Activated T-helper 1 cell treated with anti-CD3 and anti-CD28 coated beads, Interleukin-12 subunit alpha, Interleukin-12 subunit beta, Interleukin-2, Interleukin-4 antibody, amounts not matched to agents 30 ng/mL and 10 ng/mL and 1 ng/mL, durations not matched to agents 14 hours and 24 hours and 36 hours (primary cell): ENCODE measurements at regions of chr3 and their contacts with region 1.

Region 1: DNA sequence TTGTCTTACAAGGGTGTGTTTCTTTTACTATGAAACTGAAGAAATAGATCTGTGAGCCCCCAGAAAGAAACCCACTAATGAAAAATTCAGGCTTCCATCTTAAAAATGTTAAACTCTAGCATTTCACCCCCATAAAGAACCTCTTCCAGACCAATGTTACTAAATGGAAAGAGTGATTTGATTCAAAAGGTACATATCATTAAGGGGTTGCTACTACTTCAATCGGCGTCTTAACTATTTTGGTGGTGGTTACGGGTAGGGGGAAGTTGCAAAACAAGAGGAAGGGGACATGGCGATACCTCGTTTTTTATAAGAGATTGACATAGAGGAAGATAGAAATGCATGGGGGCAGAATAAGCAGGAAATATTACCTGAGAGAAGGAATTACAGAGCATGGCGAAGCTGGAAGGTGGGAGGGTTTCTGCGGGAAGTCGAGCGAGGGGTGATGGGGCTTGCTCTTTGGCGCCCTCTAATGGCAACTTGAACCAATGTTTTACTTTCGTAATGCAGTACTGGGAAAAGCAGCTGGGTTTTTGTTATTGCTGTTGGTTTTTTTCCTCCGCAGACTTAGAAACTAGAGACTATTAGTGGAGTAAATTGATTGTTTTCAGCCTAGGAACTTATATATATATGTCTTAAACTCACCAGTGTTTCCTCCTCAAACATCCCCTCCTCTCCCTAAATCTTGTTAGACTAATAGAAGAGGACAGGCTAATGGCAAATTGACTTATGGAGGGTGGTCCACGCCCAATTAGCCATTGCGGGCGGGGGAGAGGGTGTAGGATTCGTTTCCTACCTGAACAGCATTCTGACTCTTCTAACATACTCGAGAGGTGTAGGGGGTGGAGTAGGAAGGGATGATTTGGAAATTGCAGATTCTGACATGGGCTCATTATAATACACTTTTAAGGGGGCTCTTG is 11.3 kb upstream of the SOX2 start:
- DNase-seq: peak; percentile 45
- H3K4me3 Mint-ChIP-seq: peak overlapping the region; percentile 25
- H3K27ac Mint-ChIP-seq: peak overlapping the region; percentile 9
- H3K4me1 Mint-ChIP-seq: peaks cover 21% of the 10 kb centered on the region
- H3K27me3 Mint-ChIP-seq: peaks cover 88% of the 10 kb centered on the region

Region 2: DNA sequence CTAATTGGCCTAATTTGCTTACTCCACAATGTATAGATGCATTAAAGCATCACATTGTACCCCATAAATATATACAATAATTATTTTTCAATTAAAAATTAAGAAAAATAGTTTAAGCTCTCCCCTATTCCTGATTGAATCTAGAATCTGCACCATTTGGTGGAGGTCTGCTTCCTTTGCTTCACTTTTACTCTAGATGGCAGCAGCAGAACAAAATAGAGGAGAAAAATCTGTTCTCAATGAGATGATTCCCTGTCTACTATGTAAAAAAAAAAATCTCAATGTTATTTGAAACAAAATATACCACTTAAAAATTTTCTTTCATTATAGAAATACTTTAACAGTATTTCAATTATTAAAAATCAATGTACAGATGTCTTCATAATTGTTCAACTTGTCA is 897.6 kb before region 1 on chr3:
- intact Hi-C with region 1: loop called (anchors 5 kb)
- DNase-seq: no peak
- H3K4me3 Mint-ChIP-seq: no peak overlapping the region
- H3K27ac Mint-ChIP-seq: no peak overlapping the region
- H3K4me1 Mint-ChIP-seq: no peaks in the 10 kb centered on the region
- H3K27me3 Mint-ChIP-seq: peaks cover 1% of the 10 kb centered on the region

Region 3: DNA sequence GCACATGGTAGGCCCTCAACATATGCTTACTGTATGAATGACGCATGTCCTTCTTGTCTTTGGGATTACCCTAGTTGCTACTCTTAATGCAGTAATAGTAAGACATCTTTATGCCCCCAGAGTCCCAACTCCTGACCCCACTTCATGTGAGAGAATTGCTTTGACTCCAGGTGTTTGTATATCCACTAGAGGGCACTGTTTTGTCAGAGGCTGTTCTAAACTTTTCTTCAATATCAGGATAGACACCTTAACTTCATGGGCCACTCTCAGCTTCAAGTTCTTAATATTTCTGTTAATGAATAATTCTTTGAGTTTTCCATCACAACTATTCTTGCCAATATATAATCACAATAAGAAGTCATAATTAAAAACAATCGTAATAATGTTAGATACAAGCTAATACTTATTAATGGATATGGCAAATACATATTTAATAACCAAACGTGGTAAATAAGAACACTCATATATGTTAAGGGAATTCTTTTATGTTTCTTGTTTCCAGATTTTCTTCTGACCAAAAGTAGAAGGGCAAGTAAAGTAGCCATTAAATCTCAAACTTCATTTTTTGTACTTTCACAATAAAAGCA is 373.7 kb before region 1 on chr3:
- intact Hi-C with region 1: loop called (anchors 1 kb)
- DNase-seq: no peak
- H3K4me3 Mint-ChIP-seq: no peak overlapping the region
- H3K27ac Mint-ChIP-seq: no peak overlapping the region
- H3K4me1 Mint-ChIP-seq: no peaks in the 10 kb centered on the region
- H3K27me3 Mint-ChIP-seq: no peaks in the 10 kb centered on the region

Region 4: DNA sequence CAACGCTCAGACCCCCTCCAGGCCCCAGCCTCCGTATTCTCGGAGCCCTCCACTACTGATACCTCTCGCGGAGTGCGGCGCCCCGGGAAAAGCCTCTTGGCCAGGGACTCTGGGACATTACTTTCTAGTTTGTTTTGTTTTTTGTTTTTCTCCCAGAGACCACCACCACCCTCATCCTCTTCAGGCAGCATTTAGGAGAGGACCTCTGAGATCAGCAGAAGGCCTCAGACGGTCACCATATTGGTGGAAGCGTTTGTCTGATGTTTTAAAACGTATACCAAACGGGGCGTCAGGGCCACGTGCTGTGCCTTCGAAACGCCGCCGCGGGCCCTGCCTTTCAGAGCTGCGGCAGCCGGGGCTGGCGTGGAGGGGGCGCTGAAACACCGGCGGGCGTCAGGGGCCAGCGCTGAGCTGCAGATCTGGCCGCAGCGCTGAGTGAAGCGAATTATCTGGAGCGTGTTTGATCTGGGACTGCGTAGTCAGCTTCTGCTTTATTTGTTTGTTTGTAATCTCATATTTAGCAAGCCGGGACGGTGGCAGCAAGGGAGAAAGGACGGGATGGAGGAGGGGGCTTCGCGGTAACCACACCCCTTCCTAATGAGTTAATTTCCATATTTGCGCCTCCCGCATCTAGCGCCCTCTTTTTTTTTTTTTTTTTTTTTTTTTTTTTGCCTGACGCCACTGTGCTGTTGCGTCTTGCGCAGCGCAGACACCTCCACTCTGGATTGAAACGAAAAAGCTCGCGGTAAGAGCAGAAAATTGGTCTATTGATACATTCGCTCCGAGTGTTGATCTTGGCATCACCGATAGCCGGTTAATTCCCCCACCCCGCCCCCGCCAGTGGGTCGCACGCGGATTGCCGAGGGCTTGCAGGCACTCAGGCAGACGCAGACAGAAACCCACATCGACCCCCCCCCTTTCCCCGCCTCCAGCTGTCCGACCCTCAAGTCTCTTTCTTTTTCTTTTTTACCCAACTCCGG is 26.2 kb after region 1 on chr3:
- intact Hi-C with region 1: loop called (anchors 1 kb)
- DNase-seq: no peak
- H3K4me3 Mint-ChIP-seq: peak overlapping the region; percentile 51
- H3K27ac Mint-ChIP-seq: no peak overlapping the region
- H3K4me1 Mint-ChIP-seq: peaks cover 10% of the 10 kb centered on the region
- H3K27me3 Mint-ChIP-seq: peaks cover 73% of the 10 kb centered on the region